Adrenal gland (tissue), 19 donors: ENCODE measurements at regions of chr4 and their contacts with region 1.

Region 1: DNA sequence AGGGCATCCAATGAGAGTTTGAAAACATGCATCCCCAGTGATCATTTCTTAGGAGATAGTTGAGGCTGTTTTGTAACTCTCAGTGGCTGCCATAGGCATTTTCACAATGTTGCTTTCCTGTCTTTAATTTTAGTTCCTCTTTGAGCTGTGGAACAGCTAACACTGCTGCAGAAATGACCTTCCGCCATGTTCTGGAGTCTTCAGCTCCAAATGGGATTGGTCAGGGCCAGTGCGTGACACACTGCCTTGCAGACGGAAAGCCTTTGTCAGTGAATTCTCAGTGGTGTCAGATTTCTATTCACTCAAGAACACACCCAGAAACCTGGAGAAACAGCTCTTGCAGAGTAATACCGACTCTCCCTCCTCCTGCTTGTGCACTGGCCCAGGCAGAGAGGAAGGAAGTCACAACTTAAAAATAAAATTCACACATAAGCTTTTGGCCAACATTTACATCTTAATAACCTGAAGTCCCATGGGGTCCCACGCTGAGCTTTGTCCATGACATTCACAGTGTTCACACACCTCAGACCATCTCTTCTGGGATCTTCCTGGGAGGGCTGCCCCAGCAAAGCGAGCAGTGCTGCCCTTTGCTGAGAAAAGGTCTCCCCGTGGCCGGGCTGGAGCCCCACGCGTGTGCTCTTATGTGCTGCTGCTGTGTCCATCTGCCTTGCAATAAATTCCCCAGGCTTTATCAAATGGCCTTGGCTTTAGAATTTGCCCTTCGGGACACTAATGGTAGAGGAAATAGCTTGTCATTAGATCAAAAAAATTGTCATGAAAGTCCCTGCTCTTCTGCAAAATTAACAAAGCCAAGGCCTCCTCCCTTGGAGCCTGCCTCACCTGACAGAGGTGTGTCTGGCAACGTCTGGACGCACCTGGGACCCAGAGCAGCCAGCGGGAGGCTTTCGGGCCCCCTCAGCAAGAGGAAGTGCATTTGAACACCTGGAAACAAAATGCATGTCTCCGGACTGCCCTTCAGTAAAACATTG is 126.8 kb downstream of the IRF2 start:
- DNase-seq: peak; percentile 77 to 93 (median 89)
- H3K4me3 ChIP-seq: peak overlapping the region in 1 of 4 donors; percentile 31
- H3K27ac ChIP-seq: peak overlapping the region; percentile 90 to 99 (median 97)
- H3K4me1 ChIP-seq: peaks cover 54 to 73% of the 10 kb centered on the region in 2 donors
- H3K27me3 ChIP-seq: no peaks in the 10 kb centered on the region
- CTCF ChIP-seq: no peak
- POLR2A ChIP-seq: peak in 1 of 2 donors; percentile 95

Region 2: GRCh38 chr4:184100297-184100885 is 247.2 kb before region 1 on chr4:
- intact Hi-C with region 1: no loop called
- DNase-seq: peak in 6 of 7 donors; percentile 36 to 67 (median 54)
- H3K4me3 ChIP-seq: no peak overlapping the region
- H3K27ac ChIP-seq: no peak overlapping the region
- H3K4me1 ChIP-seq: peaks cover 7 to 9% of the 10 kb centered on the region in 2 donors
- H3K27me3 ChIP-seq: no peaks in the 10 kb centered on the region
- CTCF ChIP-seq: peak in 4 of 6 experiments; percentile 54 to 67 (median 62)
- POLR2A ChIP-seq: no peak

Region 3: DNA sequence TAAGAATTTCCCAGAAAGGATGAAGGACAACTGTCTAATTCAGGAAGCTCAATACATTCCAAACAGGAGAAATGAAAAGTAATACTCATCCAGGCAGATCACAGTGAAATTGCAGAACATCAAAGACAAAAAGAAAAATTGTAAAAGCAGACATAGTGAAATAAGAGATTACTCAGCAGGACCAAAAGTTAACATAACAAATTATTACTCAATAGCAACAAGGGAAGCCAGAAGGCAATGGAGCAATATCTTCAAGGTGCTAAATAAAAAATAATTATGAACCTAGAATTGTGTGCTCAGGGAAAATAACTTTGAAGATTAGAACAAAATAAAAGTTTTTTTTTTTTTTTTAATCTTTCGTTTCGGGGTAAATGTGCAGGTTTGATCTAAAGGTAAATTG is 99.3 kb before region 1 on chr4:
- intact Hi-C with region 1: no loop called
- DNase-seq: no peak
- H3K4me3 ChIP-seq: no peak overlapping the region
- H3K27ac ChIP-seq: no peak overlapping the region
- H3K4me1 ChIP-seq: no peaks in the 10 kb centered on the region
- H3K27me3 ChIP-seq: peaks cover 9% of the 10 kb centered on the region
- CTCF ChIP-seq: no peak
- POLR2A ChIP-seq: no peak

Region 4: GRCh38 chr4:184384056-184384809 is 36.7 kb after region 1 on chr4:
- intact Hi-C with region 1: loop called in 1 of 2 experiments (anchors 5 kb)
- DNase-seq: peak in 6 of 7 donors; percentile 57 to 82 (median 72)
- H3K4me3 ChIP-seq: peak overlapping the region in 1 of 4 donors; percentile 30
- H3K27ac ChIP-seq: peak overlapping the region; percentile 32 to 91 (median 85)
- H3K4me1 ChIP-seq: peaks cover 21 to 50% of the 10 kb centered on the region in 2 donors
- H3K27me3 ChIP-seq: no peaks in the 10 kb centered on the region
- CTCF ChIP-seq: no peak
- POLR2A ChIP-seq: peak in 1 of 2 donors; percentile 78

Region 5: DNA sequence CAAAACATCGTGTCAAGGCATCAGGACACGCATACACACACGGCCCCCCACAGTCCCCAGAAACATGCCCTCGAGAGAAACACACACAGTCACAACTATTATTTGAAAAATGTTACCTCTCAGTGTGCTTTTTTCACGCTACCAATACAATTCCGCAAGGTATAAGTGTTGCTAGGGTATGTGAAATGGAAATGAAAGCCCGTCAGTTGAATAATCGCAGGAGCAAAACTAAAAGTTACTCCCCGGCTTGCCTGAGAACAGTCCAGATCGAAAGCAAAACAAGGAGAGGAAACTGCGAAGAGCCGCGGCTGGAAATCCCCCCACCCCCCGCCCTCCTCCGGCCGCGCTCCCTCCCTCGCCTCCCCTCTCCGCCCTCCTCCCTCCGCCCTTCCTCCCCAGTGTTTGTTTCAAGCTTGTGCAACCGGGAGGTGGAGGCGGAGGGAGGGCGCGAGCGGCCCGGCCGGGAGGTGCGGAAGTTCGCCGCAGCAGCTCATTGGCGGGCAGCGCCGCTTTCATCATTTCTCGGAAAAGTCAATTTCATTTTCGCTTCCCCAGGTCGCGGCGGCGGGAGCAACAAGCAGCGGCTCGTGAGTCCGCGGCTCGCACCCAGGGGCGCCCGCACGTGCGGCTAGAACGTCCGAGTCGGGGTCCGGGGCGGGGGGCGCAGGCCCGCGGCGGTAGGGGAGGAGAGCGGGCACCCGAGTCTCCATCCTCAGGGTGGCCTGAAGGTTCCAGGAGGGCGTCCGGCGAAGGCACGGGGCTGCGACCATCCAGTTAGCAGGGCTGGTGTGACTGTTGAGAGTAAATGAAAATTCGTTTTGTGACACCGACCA is 126.9 kb after region 1 on chr4 and contains the start of gene IRF2:
- intact Hi-C with region 1: loop called in 1 of 2 experiments (anchors 5 kb)
- DNase-seq: peak; percentile 97 to 99 (median 98)
- H3K4me3 ChIP-seq: peak within 1 kb of the TSS; percentile 74 to 98 (median 89)
- H3K27ac ChIP-seq: peak within 1 kb of the TSS; percentile 96 to 99 (median 99)
- H3K4me1 ChIP-seq: peaks cover 30 to 56% of the 10 kb centered on the region in 2 donors
- H3K27me3 ChIP-seq: no peaks in the 10 kb centered on the region
- CTCF ChIP-seq: peak in 3 of 6 experiments; percentile 33 to 50 (median 36)
- POLR2A ChIP-seq: peak; percentile 86 to 97
- total RNA-seq, gene IRF2: 34.6 to 93.1 (median 57.1) TPM

Region 6: GRCh38 chr4:184896868-184897715 is 549.5 kb after region 1 on chr4:
- intact Hi-C with region 1: no loop called
- DNase-seq: peak in 4 of 7 donors; percentile 20 to 35 (median 26)
- H3K4me3 ChIP-seq: no peak overlapping the region
- H3K27ac ChIP-seq: peak overlapping the region in 1 of 5 donors; percentile 40
- H3K4me1 ChIP-seq: no peaks in the 10 kb centered on the region
- H3K27me3 ChIP-seq: no peaks in the 10 kb centered on the region
- CTCF ChIP-seq: no peak
- POLR2A ChIP-seq: no peak